ENCODE measurements at regions of chr1 and their contacts with region 1.

Region 1: DNA sequence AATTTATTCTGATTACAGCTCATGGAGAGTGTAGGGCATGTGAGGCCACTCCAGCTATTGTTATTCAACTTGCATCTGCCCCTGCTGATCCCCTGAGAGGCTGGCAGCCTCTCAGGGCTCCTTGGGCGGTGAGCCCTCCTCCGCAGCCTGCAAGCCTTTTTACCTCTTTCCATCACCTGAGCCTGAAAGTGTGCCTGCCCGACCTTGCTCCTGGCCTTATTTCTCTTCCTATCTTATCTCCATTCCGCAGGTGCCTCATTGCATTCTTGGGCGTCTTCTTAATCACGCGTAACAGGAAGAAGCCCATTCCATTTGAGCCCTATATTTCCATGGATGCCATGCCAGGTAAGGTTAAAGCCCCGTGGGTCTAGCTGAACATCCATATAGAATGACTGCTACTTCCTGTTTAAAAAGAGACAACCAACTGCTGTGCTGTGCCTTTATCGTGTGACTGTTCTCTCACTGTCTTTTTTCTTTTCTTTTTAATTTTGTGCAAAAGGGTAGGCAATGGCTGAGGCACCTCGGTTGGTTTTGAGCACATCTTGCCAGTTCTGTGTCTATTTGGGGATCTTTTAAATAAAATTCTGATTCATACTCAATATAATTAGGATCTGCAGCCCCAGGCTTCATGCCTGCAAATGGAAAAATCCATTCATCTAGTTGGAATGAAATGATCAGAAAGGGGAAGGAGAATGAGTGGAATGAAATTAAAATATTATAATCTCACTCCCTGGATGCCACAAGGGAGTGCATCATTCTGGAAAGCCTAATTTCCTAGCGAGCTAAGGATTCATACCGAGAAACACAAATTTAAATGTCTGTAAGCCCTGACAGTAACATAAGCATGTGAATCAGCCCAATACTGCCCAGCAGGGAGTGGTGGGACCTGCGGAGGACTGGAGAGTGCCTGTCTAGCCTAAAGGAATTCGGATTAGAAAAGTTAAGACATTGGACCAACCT is 38.6 kb upstream of the RCAN3 start:
- DNase-seq: peak; percentile 59 to 65
- H3K4me3 ChIP-seq: peak overlapping the region; percentile 7 to 52 (median 24); a peak in 6 of 8 replicates
- H3K27ac ChIP-seq: no peak overlapping the region; the same call in 1 of the 2 replicates
- H3K4me1 ChIP-seq: peaks cover 11 to 22% (median 17%) of the 10 kb centered on the region in 4 experiments; a peak in 6 of 7 replicates
- H3K27me3 ChIP-seq: no peaks in the 10 kb centered on the region
- CTCF ChIP-seq: no peak
- EP300 ChIP-seq: no peak
- POLR2A ChIP-seq: no peak
- RAD21 ChIP-seq: no peak

Region 2: GRCh38 chr1:24216276-24217074 is 247.6 kb before region 1 on chr1:
- CTCF ChIA-PET with region 1: no interaction called
- POLR2A ChIA-PET with region 1: no interaction called
- DNase-seq: no peak
- H3K4me3 ChIP-seq: no peak overlapping the region
- H3K27ac ChIP-seq: no peak overlapping the region
- H3K4me1 ChIP-seq: peaks cover 0 to 6% (median 2%) of the 10 kb centered on the region in 4 experiments; a peak in 3 of 7 replicates
- H3K27me3 ChIP-seq: no peaks in the 10 kb centered on the region
- CTCF ChIP-seq: no peak
- EP300 ChIP-seq: no peak
- POLR2A ChIP-seq: no peak
- RAD21 ChIP-seq: peak in 1 of 2 experiments; percentile 3; a peak in 1 of 4 replicates

Region 3: DNA sequence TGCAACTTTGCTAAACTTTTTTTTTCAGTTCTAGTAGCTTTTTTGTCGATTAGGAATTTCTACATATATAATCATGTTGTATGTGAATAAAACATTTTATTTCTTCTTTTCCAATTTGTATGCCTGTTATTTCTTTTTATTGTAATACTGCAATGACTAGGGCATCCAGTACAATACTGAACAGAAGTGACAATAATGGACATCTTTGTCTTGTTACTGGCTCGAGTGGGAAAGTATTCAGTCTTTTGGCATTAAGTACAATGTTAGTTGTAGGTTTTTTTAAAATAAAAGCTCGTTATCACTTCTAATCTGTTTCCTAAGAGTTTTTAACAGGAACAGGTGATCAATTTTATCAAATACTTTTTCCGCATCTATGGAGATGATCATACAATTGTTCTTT is 60.2 kb before region 1 on chr1:
- CTCF ChIA-PET with region 1: no interaction called
- POLR2A ChIA-PET with region 1: no interaction called
- DNase-seq: no peak
- H3K4me3 ChIP-seq: no peak overlapping the region
- H3K27ac ChIP-seq: no peak overlapping the region
- H3K4me1 ChIP-seq: no peaks in the 10 kb centered on the region
- H3K27me3 ChIP-seq: no peaks in the 10 kb centered on the region
- CTCF ChIP-seq: no peak
- EP300 ChIP-seq: no peak
- POLR2A ChIP-seq: no peak
- RAD21 ChIP-seq: no peak

Region 4: DNA sequence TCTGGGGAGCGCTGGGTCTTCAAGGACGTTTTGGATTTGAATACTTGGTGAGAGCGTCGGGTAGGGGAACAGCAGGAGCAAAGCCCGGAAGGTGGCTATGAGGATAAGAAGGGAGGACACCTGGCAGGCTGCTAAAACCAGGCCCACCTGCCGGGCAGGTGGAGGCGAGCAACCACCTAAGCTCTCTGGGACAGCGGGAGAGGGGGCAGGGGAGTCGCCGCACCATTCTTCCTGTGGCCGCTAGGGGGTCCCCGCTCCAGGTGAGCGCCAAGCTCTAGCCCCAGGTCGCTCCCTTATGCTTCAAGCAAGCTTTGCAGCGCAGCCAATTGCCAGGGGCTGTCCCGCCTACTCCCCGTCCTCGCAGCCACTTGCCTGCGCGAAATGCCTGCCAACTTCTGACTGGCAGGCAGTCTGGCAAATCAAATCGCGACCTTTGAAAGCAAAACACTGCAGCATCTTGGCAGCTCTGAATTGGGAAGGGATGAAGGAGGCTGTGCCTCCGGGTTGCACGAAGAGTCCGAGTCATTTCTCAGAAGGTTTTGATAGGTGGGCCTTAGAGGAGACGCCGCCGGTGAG is 48.6 kb before region 1 on chr1 and contains the start of gene NIPAL3:
- CTCF ChIA-PET with region 1: interaction called, 15 read pairs
- POLR2A ChIA-PET with region 1: no interaction called
- DNase-seq: peak; percentile 95 to 100
- H3K4me3 ChIP-seq: peak within 1 kb of the TSS; percentile 50 to 89 (median 76)
- H3K27ac ChIP-seq: no peak within 1 kb of the TSS
- H3K4me1 ChIP-seq: peaks cover 0 to 6% (median under 1%) of the 10 kb centered on the region in 4 experiments; a peak in 3 of 7 replicates
- H3K27me3 ChIP-seq: no peaks in the 10 kb centered on the region
- CTCF ChIP-seq: peak; percentile 83 to 93 (median 85)
- EP300 ChIP-seq: no peak
- POLR2A ChIP-seq: no peak
- RAD21 ChIP-seq: peak; percentile 67 to 71
- total RNA-seq, gene NIPAL3: 11.0 and 12.6 TPM in 2 replicates

Measured in H1 (cell line).